ENCODE measurements at regions of chr2 and their contacts with region 1.

Region 1: DNA sequence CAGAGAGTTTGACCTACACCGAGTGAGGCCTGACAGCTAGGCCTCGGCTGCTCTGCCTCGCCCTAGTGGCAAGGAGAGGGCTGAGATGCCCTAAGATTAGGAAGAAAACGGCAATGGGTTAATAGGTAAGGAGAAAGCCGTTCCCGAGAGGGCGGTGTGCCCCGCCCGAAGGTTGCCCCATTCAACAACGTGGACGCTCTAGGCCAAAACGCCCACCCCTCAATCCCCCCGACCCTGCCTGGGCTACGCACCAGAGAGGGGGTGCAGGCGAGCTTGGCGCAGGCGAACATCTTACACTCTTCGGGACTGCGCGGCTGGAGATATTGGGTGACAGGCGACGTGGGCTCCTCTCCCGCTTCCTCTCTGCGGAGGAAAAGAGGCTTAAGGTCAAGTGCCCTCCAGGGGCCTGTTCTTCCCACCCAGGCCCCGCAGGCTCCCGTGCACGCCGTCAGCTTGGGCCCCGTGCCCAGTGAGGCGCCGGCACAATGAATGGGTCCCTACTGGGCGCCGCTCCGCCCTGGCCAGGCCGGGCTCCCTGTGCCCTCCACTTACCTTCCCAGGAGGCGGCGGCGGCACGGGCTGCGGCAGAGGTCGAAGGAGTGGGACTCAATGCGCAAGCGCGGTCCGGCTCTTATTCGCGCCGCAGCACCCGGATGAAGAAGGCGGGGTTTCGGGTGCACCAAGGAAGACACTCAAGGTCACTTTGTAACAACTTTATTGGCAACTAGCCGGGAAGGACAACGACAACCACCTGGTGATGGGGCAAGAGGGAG is at the start of gene ATP5MC3:
- DNase-seq: peak; percentile 94

Region 2: DNA sequence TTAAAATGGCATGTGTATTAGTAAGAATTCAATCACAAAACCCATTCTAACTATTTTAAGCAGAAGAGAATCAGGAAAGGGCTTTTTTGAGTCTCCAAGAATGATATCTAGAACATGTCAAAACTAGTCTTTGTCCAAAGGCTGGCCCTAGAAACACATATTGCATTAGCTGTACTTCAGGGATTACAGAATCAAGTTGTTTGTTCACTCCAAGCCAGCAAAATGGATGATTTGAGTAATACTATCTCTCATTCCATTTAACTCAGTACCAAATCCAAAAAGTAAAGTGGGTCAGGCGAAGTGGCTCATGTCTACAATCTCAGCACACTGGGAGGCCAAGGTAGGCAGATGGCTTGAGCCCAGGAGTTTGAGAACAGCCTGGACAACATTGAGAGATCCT is 54.6 kb before region 1 on chr2:
- CTCF ChIA-PET with region 1: no interaction called
- POLR2A ChIA-PET with region 1: no interaction called
- DNase-seq: no peak

Region 3: DNA sequence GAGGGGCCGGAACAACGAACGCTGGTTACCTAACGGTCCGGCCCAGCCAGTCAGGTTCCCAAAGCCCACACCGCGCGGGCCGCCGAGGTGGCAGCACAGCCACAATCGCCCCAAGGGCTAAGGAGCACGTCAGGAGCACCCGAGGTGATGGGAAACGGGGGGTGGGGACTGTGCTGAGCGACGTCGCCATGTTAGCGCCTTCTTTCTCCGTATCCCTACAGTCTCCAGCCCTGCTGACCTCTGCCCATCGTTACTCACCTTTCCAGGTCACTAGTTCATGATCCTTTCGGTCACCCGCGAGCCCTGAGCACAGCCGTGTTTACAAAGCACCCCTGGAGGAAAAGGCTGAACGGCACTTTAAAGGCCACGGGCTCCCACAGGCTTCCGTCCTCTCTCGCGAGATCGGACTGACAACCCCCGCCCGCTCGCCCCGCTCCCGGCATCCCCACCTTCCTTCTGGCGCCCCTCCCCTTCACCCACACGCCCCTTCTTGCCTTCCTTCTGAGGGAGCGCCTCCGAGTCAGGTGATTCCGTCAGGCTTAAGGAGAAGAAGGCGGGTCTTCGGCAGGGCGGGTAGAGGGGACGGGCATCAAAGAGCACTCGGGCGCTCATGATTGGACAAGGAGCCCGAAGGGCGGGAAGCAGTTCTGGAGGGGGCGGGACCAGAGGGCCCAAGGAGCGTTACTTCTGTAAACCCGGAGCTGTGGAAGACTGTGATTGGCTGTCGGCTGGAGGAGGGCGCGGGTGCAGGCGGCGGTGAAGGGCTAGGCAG is 13.3 kb before region 1 on chr2 and contains the start of gene ATF2:
- CTCF ChIA-PET with region 1: no interaction called
- POLR2A ChIA-PET with region 1: interaction called, 17 read pairs
- DNase-seq: peak; percentile 93

Measured in HEK293T (cell line).